CD4-positive, alpha-beta memory T cell (primary cell): ENCODE measurements at regions of chr19 and their contacts with region 1.

Region 1: GRCh38 chr19:18000935-18001778 is 6.8 kb upstream of the ARRDC2 start:
- DNase-seq: peak; percentile 96 to 98 (median 97)
- H3K4me3 ChIP-seq: peak overlapping the region; percentile 76 to 86
- H3K4me3 Mint-ChIP-seq: peak overlapping the region; percentile 88 to 96 (median 92)
- H3K27ac ChIP-seq: peak overlapping the region; percentile 88
- H3K27ac Mint-ChIP-seq: peak overlapping the region; percentile 93 to 100 (median 100)
- H3K4me1 ChIP-seq: peaks cover 33% of the 10 kb centered on the region
- H3K4me1 Mint-ChIP-seq: peaks cover 10 to 41% (median 24%) of the 10 kb centered on the region in 4 donors
- H3K27me3 ChIP-seq: no peaks in the 10 kb centered on the region
- H3K27me3 Mint-ChIP-seq: no peaks in the 10 kb centered on the region

Region 2: GRCh38 chr19:17718947-17719711 is 282.0 kb before region 1 on chr19 and contains the start of gene MAP1S:
- CTCF ChIA-PET with region 1: no interaction called
- POLR2A ChIA-PET with region 1: no interaction called
- intact Hi-C with region 1: no loop called
- DNase-seq: peak; percentile 42 to 59 (median 47)
- H3K4me3 ChIP-seq: peak within 1 kb of the TSS; percentile 51 to 88
- H3K4me3 Mint-ChIP-seq: peak within 1 kb of the TSS; percentile 88 to 93 (median 90)
- H3K27ac ChIP-seq: peak within 1 kb of the TSS; percentile 53
- H3K27ac Mint-ChIP-seq: peak within 1 kb of the TSS; percentile 82 to 94 (median 91)
- H3K4me1 ChIP-seq: peaks cover 32% of the 10 kb centered on the region
- H3K4me1 Mint-ChIP-seq: peaks cover 19 to 46% (median 36%) of the 10 kb centered on the region in 4 donors
- H3K27me3 ChIP-seq: no peaks in the 10 kb centered on the region
- H3K27me3 Mint-ChIP-seq: no peaks in the 10 kb centered on the region
- total RNA-seq, gene MAP1S: 59.1 to 64.9 TPM

Region 3: DNA sequence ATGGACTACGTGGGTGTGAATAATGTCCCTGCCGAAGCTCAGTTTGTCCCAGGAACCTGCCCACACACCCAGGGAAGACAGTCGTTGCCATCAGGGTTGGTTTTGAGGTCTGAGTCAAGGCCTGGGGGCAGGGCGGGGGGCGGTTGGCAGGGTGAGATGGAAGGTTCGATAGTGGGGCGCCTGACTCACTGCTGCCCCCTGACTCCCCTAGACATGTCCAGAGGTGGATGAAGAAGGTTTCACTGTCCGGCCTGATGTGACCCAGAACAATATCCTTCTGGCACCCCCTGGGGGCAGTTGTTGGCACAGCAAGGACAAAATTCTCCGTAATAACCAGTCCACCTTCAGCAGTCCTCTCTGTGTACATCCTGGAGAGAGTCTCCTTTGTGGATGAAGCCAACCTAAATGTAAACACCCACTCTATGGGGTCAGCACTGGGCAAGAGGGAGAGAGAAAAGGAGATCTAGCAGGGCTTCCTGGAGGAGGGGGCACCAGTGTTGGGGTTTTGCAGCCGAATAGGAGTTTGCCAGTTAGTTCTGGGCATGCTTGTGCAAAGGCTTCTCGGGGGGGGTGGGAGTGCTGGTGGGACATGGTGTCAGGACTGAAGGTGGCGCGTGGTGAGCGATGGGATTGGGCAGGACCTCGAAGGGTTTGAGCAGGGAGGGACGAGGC is 225.8 kb before region 1 on chr19:
- CTCF ChIA-PET with region 1: no interaction called
- POLR2A ChIA-PET with region 1: no interaction called
- intact Hi-C with region 1: no loop called
- DNase-seq: no peak
- H3K4me3 ChIP-seq: no peak overlapping the region
- H3K4me3 Mint-ChIP-seq: no peak overlapping the region
- H3K27ac ChIP-seq: no peak overlapping the region
- H3K27ac Mint-ChIP-seq: peak overlapping the region in 6 of 7 donors; percentile 24 to 75 (median 38)
- H3K4me1 ChIP-seq: no peaks in the 10 kb centered on the region
- H3K4me1 Mint-ChIP-seq: peaks cover 2 to 7% (median 5%) of the 10 kb centered on the region in 4 donors
- H3K27me3 ChIP-seq: no peaks in the 10 kb centered on the region
- H3K27me3 Mint-ChIP-seq: no peaks in the 10 kb centered on the region

Region 4: GRCh38 chr19:17932485-17933338 is 68.4 kb before region 1 on chr19 and contains the start of gene CCDC124:
- CTCF ChIA-PET with region 1: interaction called, 402 read pairs
- POLR2A ChIA-PET with region 1: interaction called, 38 read pairs
- intact Hi-C with region 1: loop called (anchors 2 kb)
- DNase-seq: peak; percentile 93 to 95 (median 95)
- H3K4me3 ChIP-seq: peak within 1 kb of the TSS; percentile 63 to 73
- H3K4me3 Mint-ChIP-seq: peak within 1 kb of the TSS; percentile 89 to 98 (median 92)
- H3K27ac ChIP-seq: peak within 1 kb of the TSS; percentile 96
- H3K27ac Mint-ChIP-seq: peak within 1 kb of the TSS; percentile 92 to 99 (median 98)
- H3K4me1 ChIP-seq: peaks cover 19% of the 10 kb centered on the region
- H3K4me1 Mint-ChIP-seq: peaks cover 7 to 24% (median 14%) of the 10 kb centered on the region in 4 donors
- H3K27me3 ChIP-seq: no peaks in the 10 kb centered on the region
- H3K27me3 Mint-ChIP-seq: no peaks in the 10 kb centered on the region
- total RNA-seq, gene CCDC124: 30.0 to 34.2 TPM

Region 5: DNA sequence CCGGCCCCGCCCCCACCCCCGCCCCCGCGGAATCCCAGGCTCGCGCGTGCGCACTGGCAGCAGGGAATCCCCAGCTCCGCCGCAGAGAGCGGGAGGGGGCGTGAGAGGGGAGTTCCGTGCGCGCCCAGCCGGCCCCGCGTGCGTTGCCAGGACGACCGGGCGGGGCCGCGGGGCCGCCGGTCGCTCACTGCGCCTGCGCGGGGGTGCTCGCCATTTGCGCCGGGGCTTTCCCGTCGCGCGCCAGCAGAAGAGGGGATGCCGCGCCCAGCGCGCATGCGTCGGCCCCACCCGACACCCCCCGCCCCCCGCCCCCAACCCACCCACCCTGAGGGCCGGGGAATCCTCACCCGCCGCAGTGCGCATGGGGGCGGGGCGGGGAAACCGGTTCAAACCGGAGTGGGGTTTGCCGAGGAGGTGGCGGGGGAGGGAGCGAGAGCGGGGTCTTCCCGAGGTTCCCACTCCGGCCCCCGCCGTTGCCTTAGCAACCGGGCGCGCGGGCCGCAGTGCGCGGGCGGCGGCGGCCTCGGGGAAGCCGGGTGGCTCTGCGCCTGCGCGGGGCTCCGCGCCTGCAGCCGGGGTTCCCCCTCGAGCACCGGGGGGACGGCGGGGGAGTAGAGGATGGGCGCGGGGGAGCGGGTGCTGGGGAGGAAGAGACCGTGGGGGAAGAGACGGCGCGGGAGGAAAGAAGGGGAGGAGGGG is 53.2 kb before region 1 on chr19:
- CTCF ChIA-PET with region 1: interaction called, 402 read pairs
- POLR2A ChIA-PET with region 1: interaction called, 34 read pairs
- intact Hi-C with region 1: loop called (anchors 1 kb)
- DNase-seq: peak; percentile 94 to 97 (median 96)
- H3K4me3 ChIP-seq: peak overlapping the region in 1 of 2 donors; percentile 43
- H3K4me3 Mint-ChIP-seq: peak overlapping the region; percentile 54 to 90 (median 80)
- H3K27ac ChIP-seq: peak overlapping the region; percentile 100
- H3K27ac Mint-ChIP-seq: peak overlapping the region; percentile 64 to 99 (median 84)
- H3K4me1 ChIP-seq: peaks cover 52% of the 10 kb centered on the region
- H3K4me1 Mint-ChIP-seq: peaks cover 25 to 62% (median 41%) of the 10 kb centered on the region in 4 donors
- H3K27me3 ChIP-seq: peaks cover 25% of the 10 kb centered on the region
- H3K27me3 Mint-ChIP-seq: peaks cover 21 to 27% of the 10 kb centered on the region in 2 donors

Region 6: DNA sequence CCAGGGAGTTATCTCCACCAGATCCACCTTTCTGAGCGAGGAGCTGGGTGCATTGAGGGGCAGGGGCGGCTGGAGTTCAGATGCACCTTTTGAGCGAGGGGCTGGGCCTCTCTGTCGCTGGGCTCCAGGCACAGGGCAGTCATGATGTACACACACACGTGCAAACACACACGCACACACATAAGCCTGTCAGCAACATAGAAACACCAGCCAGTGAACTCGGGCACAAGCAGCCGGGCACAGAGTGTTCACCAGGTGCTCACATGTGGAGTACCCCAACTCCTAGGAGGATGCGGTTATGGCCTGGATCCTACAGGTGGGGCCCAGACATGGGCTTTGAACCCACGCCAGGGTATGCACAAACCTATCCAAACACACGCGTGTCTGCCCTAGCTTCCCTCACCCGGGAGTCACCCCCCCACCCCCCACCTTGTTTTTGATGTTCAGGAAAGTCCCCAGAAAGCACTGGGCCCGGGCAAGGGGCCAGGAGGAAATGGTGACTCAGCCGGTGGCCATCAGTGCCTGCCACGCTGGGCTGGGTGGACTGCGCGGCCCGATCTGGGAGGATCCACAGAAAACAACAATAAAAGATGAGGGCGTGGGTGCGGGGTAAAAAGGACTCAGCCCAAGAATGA is 20.1 kb after region 1 on chr19:
- CTCF ChIA-PET with region 1: no interaction called
- POLR2A ChIA-PET with region 1: interaction called, 135 read pairs
- intact Hi-C with region 1: no loop called
- DNase-seq: peak; percentile 57 to 91 (median 64)
- H3K4me3 ChIP-seq: no peak overlapping the region
- H3K4me3 Mint-ChIP-seq: peak overlapping the region; percentile 45 to 85 (median 68)
- H3K27ac ChIP-seq: peak overlapping the region; percentile 66
- H3K27ac Mint-ChIP-seq: peak overlapping the region; percentile 91 to 99 (median 96)
- H3K4me1 ChIP-seq: peaks cover 61% of the 10 kb centered on the region
- H3K4me1 Mint-ChIP-seq: peaks cover 41 to 76% (median 60%) of the 10 kb centered on the region in 4 donors
- H3K27me3 ChIP-seq: no peaks in the 10 kb centered on the region
- H3K27me3 Mint-ChIP-seq: no peaks in the 10 kb centered on the region

Region 7: DNA sequence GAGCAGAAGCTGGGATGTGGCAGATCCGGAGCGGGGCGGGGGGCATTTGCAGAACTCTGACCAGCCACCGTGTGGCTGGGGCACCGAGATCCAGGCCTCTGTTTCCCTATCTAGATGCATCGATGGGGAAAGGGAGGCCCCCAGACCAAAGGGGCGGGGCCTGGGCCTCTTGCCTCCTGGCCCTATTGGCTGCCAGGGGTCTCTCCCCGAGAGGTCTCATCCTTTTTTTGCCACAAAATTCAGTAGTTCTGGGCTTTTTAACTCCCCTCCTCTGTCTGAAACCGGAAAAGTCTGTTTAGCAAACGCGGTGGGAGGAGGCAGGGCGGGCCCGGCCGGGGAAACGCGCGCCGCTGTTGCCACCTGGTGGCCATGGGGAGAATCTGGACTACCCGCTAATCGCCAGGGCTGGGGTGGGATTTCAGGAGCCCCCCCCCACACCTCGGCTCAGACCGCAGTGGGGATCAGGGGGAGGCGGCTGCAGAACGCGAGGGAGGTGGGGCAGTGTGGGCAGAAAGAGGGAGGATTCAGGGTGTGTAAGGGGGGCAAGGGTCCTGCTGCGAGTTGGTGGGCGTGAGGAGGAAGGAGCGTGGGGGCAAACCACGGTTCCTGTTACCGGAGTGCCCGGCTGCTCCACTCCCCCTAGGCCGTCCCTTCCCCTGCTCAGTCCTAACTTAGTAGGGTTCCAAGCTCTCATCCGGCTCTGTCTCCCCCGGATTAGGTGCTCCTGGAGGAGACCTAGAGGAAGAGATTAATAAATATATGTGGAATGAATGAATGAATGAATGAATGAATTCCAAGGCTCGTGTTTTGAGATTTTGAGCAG is 57.3 kb after region 1 on chr19:
- CTCF ChIA-PET with region 1: interaction called, 148 read pairs
- POLR2A ChIA-PET with region 1: interaction called, 140 read pairs
- intact Hi-C with region 1: no loop called
- DNase-seq: peak; percentile 75 to 85 (median 82)
- H3K4me3 ChIP-seq: no peak overlapping the region
- H3K4me3 Mint-ChIP-seq: peak overlapping the region in 5 of 8 donors; percentile 22 to 64 (median 39)
- H3K27ac ChIP-seq: peak overlapping the region; percentile 44
- H3K27ac Mint-ChIP-seq: peak overlapping the region; percentile 66 to 96 (median 88)
- H3K4me1 ChIP-seq: peaks cover 11% of the 10 kb centered on the region
- H3K4me1 Mint-ChIP-seq: peaks cover 9 to 15% (median 12%) of the 10 kb centered on the region in 4 donors
- H3K27me3 ChIP-seq: no peaks in the 10 kb centered on the region
- H3K27me3 Mint-ChIP-seq: no peaks in the 10 kb centered on the region

Region 8: GRCh38 chr19:18109733-18110595 is 108.8 kb after region 1 on chr19:
- CTCF ChIA-PET with region 1: interaction called, 4 read pairs
- POLR2A ChIA-PET with region 1: interaction called, 12 read pairs
- intact Hi-C with region 1: no loop called
- DNase-seq: peak in 2 of 5 donors; percentile 32 to 33
- H3K4me3 ChIP-seq: peak overlapping the region; percentile 36 to 67
- H3K4me3 Mint-ChIP-seq: peak overlapping the region; percentile 74 to 89 (median 83)
- H3K27ac ChIP-seq: peak overlapping the region; percentile 61
- H3K27ac Mint-ChIP-seq: peak overlapping the region in 5 of 7 donors; percentile 63 to 94 (median 90)
- H3K4me1 ChIP-seq: peaks cover 20% of the 10 kb centered on the region
- H3K4me1 Mint-ChIP-seq: peaks cover 9 to 24% (median 16%) of the 10 kb centered on the region in 4 donors
- H3K27me3 ChIP-seq: no peaks in the 10 kb centered on the region
- H3K27me3 Mint-ChIP-seq: no peaks in the 10 kb centered on the region

Region 9: GRCh38 chr19:18144361-18144760 is 143.2 kb after region 1 on chr19:
- CTCF ChIA-PET with region 1: no interaction called
- POLR2A ChIA-PET with region 1: no interaction called
- intact Hi-C with region 1: no loop called
- DNase-seq: no peak
- H3K4me3 ChIP-seq: no peak overlapping the region
- H3K4me3 Mint-ChIP-seq: no peak overlapping the region
- H3K27ac ChIP-seq: no peak overlapping the region
- H3K27ac Mint-ChIP-seq: no peak overlapping the region
- H3K4me1 ChIP-seq: no peaks in the 10 kb centered on the region
- H3K4me1 Mint-ChIP-seq: no peaks in the 10 kb centered on the region
- H3K27me3 ChIP-seq: no peaks in the 10 kb centered on the region
- H3K27me3 Mint-ChIP-seq: no peaks in the 10 kb centered on the region

Region 10: DNA sequence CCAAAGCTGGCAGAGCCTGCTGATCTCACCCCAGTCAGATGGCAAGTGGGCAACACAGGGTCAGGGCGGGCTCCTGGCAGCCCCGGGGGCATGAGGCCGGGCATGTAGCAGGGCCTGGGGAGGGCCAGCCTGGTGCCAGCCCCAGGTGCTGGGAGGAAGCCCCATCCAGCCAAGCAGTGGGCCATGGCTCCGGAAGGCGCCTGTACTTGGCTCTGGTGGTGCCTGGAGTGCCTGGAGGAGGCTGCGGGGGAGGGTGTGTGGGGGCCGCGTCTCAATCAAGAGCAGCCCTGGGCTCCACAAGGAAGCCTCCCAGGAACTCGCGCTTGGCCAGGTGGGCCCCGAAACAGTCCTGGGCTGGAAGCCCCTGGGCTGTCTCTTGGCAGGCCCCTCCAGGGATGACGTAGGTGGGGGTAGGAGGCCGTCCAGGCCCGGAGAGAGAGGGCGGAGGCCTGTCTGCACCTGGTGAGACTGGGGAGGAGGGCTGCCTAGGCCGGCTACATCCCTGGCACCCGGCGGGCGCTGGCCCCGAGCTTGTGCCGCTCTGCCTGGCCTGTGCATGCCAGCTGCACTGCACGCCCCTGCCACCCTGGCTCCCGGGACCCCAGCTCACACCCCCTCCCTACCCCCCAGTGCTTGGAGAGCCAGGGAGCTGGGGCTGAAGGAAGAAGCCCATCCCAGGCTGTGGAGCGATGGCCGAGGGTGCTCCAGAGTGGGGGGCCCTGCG is 744.0 kb after region 1 on chr19:
- CTCF ChIA-PET with region 1: no interaction called
- POLR2A ChIA-PET with region 1: no interaction called
- intact Hi-C with region 1: no loop called
- DNase-seq: no peak
- H3K4me3 ChIP-seq: no peak overlapping the region
- H3K4me3 Mint-ChIP-seq: no peak overlapping the region
- H3K27ac ChIP-seq: no peak overlapping the region
- H3K27ac Mint-ChIP-seq: no peak overlapping the region
- H3K4me1 ChIP-seq: no peaks in the 10 kb centered on the region
- H3K4me1 Mint-ChIP-seq: no peaks in the 10 kb centered on the region
- H3K27me3 ChIP-seq: no peaks in the 10 kb centered on the region
- H3K27me3 Mint-ChIP-seq: no peaks in the 10 kb centered on the region